ENCODE measurements at regions of chr4 and their contacts with region 1.

Region 1: DNA sequence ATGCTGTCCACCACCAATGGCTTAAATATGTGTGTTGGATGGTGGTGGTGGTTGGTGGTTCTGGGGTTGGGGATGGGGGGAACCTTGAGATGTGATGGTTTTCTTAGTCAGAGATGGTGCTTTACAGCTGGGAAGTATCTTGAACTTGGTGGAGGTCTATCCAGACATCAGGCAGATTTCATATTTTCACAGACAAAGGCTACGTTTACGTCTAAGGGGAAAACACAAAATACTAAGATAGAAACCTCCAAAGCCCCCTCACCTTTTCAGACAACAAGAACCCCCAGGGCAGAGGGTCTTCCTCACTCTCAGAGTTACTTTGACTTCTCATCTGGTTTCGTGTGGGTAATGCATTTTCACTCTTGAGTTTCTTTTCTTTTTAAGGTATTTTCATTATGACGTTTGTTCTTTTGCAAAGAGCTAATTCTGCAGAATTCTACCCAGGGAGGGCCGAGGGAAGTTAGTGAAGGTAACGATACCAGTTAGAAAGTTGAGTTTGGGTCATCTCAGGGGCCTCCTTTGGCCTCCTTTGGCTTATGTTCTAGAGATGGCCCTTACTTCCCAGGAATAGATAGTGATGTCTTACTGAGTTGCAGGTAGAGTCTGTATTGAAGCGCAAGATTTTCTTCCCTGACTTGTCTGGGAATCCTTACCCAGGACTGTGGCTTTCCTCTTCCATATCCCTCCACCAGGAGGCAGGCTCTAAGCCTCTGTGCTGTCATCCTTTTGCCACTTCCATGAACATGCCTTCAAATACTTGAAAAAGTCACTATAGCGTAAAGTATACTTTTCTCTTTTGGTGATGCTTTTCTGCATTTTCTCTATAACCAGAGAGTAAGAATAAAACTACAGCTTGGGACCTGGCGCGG is 31.9 kb downstream of the RHOH start:
- DNase-seq: peak in 1 of 35 experiments; percentile 52
- ATAC-seq: no peak
- H3K4me3 ChIP-seq: peak overlapping the region; percentile 15 to 19
- H3K4me3 Mint-ChIP-seq: peak overlapping the region; percentile 68 to 83 (median 76)
- H3K27ac ChIP-seq: peak overlapping the region; percentile 87
- H3K27ac Mint-ChIP-seq: peak overlapping the region; percentile 97 to 99
- H3K4me1 ChIP-seq: peaks cover 76 to 90% of the 10 kb centered on the region in 2 experiments
- H3K4me1 Mint-ChIP-seq: peaks cover 91 to 94% (median 91%) of the 10 kb centered on the region in 3 donors
- H3K27me3 ChIP-seq: no peaks in the 10 kb centered on the region
- H3K27me3 Mint-ChIP-seq: no peaks in the 10 kb centered on the region

Region 2: GRCh38 chr4:40170588-40170987 is 58.1 kb before region 1 on chr4:
- CTCF ChIA-PET with region 1: no interaction called
- POLR2A ChIA-PET with region 1: no interaction called
- DNase-seq: no peak
- ATAC-seq: no peak
- H3K4me3 ChIP-seq: no peak overlapping the region
- H3K4me3 Mint-ChIP-seq: no peak overlapping the region
- H3K27ac ChIP-seq: no peak overlapping the region
- H3K27ac Mint-ChIP-seq: peak overlapping the region in 1 of 2 donors; percentile 5
- H3K4me1 ChIP-seq: peaks cover 5 to 9% of the 10 kb centered on the region in 2 experiments
- H3K4me1 Mint-ChIP-seq: peaks cover 17 to 29% (median 23%) of the 10 kb centered on the region in 3 donors
- H3K27me3 ChIP-seq: no peaks in the 10 kb centered on the region
- H3K27me3 Mint-ChIP-seq: no peaks in the 10 kb centered on the region

Region 3: DNA sequence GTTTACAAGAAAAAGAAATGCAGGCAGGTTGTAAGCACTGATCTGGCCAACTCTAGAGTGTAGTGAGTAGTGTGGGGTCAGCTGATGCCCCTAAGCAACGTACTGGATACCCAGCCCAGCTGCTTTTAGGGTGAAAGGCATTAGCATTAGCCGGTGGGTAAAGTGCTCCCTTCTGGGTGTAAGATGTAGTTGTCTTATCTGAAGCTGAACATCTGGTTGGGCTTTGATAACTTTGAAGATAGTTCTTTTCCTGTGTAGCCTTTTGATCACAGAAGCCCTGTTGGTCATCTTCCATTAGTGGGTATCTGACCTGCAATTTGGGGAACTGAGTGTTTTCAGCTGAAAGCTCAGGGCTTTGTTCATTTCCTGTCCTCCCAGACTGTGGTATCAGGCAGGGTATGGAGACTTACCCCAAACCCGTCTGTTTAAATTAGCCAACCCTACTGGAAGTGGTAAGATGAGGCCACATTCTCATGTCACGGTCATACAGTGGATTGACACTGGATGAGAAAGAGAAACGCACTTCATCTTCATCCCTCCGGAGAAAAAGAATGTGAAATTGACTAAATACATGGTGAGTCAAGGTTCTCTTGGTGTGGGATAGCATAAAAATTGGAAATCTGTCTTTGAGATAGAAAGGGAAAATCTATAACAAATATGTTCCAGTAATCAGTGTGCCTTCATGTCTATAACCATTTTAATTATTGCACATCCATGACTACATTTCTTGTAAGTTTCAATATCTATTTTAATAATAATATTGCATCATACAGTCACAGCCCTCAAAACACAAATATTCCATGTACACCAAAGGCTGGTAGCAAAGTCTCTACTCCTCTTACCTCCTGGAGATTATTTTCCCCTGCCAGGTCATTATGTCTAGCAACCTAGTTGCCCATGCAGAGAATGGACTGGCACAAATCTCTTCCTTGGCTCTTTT is 23.2 kb before region 1 on chr4:
- CTCF ChIA-PET with region 1: interaction called, 3 to 9 read pairs
- POLR2A ChIA-PET with region 1: interaction called, 8 to 19 read pairs
- DNase-seq: peak in 2 of 35 experiments; percentile 48 to 63
- ATAC-seq: peak; percentile 34 to 50 (median 46)
- H3K4me3 ChIP-seq: peak overlapping the region; percentile 87 to 96
- H3K4me3 Mint-ChIP-seq: peak overlapping the region; percentile 96 to 99 (median 98)
- H3K27ac ChIP-seq: peak overlapping the region; percentile 99
- H3K27ac Mint-ChIP-seq: peak overlapping the region; percentile 93 to 96
- H3K4me1 ChIP-seq: peaks cover 55 to 58% of the 10 kb centered on the region in 2 experiments
- H3K4me1 Mint-ChIP-seq: peaks cover 62 to 82% (median 76%) of the 10 kb centered on the region in 3 donors
- H3K27me3 ChIP-seq: no peaks in the 10 kb centered on the region
- H3K27me3 Mint-ChIP-seq: no peaks in the 10 kb centered on the region

Region 4: GRCh38 chr4:40212674-40213527 is 15.8 kb before region 1 on chr4:
- CTCF ChIA-PET with region 1: interaction called in 1 of 2 experiments, 9 read pairs
- POLR2A ChIA-PET with region 1: interaction called, 12 to 19 read pairs
- DNase-seq: no peak
- ATAC-seq: no peak
- H3K4me3 ChIP-seq: peak overlapping the region in 1 of 2 donors; percentile 15
- H3K4me3 Mint-ChIP-seq: peak overlapping the region; percentile 62 to 83 (median 78)
- H3K27ac ChIP-seq: peak overlapping the region; percentile 99
- H3K27ac Mint-ChIP-seq: peak overlapping the region; percentile 94 to 96
- H3K4me1 ChIP-seq: peaks cover 74 to 79% of the 10 kb centered on the region in 2 experiments
- H3K4me1 Mint-ChIP-seq: peaks cover 92 to 98% (median 95%) of the 10 kb centered on the region in 3 donors
- H3K27me3 ChIP-seq: no peaks in the 10 kb centered on the region
- H3K27me3 Mint-ChIP-seq: no peaks in the 10 kb centered on the region

Region 5: GRCh38 chr4:40238700-40239548 is 10.2 kb after region 1 on chr4:
- CTCF ChIA-PET with region 1: interaction called, 3 to 6 read pairs
- POLR2A ChIA-PET with region 1: interaction called, 10 to 12 read pairs
- DNase-seq: peak in 34 of 35 experiments; percentile 56 to 92 (median 79)
- ATAC-seq: peak; percentile 86 to 94 (median 92)
- H3K4me3 ChIP-seq: peak overlapping the region; percentile 28 to 29
- H3K4me3 Mint-ChIP-seq: peak overlapping the region; percentile 67 to 76 (median 73)
- H3K27ac ChIP-seq: peak overlapping the region; percentile 97
- H3K27ac Mint-ChIP-seq: peak overlapping the region; percentile 93 to 95
- H3K4me1 ChIP-seq: peaks cover 67 to 99% of the 10 kb centered on the region in 2 experiments
- H3K4me1 Mint-ChIP-seq: peaks cover 91 to 95% (median 94%) of the 10 kb centered on the region in 3 donors
- H3K27me3 ChIP-seq: no peaks in the 10 kb centered on the region
- H3K27me3 Mint-ChIP-seq: no peaks in the 10 kb centered on the region

Measured in T-cell (primary cell).